ENCODE measurements at regions of chr7 and their contacts with region 1.

Region 1: DNA sequence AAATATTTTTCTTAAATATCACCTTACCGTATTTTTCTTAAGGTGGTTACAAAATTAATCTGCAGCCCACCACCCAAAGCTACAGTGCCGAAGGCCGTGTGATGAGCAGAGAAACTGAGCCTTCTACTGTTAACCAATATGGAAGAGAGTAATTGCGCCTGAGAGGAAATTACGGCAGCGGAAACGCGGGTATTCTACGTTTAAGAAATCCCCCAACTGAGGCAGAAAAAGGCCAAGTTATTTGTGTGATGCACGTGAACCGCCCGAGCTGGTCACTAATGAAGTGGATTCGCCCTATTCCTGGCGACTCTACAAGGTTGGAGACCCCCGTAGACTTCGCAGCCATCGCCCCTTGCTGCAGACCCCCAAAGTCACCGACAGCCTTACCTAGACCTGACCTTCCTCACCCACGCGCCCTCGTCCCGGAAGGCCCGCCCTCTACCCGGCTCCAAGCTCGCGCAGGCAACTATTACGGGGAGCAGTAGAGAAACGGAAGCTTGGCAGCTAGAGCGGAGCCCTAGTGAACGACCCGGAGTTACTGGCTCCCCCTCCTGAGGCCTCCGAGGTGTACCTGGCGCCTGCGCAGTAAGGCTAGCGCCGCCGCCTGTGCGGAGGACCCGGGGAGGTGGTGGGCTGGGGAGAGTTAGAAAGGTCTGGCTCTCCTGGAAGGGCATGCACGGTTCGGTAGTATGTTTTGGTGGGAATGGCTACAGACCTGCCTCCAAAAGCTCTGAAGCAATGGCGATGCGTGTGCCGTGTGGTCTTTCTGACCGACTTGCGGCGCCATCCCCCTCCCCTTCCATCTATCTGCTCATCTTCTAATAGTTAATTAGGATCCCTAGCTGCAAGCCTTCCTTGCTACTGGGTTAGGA is at the start of gene MRPS33:
- DNase-seq: peak; percentile 95 to 97 (median 96)
- H3K4me3 ChIP-seq: peak within 1 kb of the TSS; percentile 61 to 85
- H3K4me3 Mint-ChIP-seq: peak within 1 kb of the TSS; percentile 95 to 100 (median 98)
- H3K27ac ChIP-seq: peak within 1 kb of the TSS; percentile 96
- H3K27ac Mint-ChIP-seq: peak within 1 kb of the TSS; percentile 99 to 100 (median 100)
- H3K4me1 ChIP-seq: peaks cover 24% of the 10 kb centered on the region
- H3K4me1 Mint-ChIP-seq: peaks cover 19 to 42% (median 34%) of the 10 kb centered on the region in 4 donors
- H3K27me3 ChIP-seq: no peaks in the 10 kb centered on the region
- H3K27me3 Mint-ChIP-seq: peaks cover 5 to 7% of the 10 kb centered on the region in 2 donors
- total RNA-seq, gene MRPS33: 46.7 to 48.0 TPM

Region 2: DNA sequence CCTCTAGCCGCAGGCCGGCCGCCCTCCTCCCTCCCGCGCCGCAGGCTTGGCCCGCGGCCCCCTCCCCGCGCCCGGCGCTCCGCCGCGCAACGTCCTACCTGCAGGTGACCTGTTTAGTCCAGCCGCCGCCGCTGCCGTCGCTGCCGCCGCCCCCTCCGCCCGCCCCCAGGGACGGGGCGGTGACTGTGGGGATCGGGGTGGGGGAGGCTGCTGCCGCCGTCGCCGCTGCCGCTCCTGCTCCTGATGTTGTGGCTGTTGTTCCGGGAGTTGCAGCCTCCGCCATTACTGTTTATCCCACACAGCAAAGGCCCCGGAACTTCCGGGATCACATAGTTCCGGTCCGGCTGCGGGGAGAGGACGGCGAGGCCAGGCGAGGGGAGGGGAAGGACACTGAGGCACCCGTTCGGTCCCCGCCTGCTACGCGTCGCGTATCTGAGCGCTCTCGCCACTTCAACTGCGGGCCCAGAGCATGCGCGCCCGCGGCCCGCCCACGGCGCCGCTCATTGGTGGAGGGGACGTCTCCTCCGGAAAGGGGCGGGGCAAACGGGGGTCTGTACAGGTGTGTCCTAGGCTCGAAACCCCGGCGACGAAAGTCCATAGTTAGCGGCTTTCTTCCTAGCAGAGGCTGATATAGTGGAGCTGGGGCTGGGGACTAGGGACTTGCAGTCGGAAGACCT is 535.6 kb before region 1 on chr7 and contains the start of gene MKRN1:
- CTCF ChIA-PET with region 1: interaction called, 3 read pairs
- POLR2A ChIA-PET with region 1: interaction called, 12 read pairs
- intact Hi-C with region 1: loop called (anchors 1 kb)
- DNase-seq: peak; percentile 90 to 93 (median 90)
- H3K4me3 ChIP-seq: peak within 1 kb of the TSS; percentile 59 to 71
- H3K4me3 Mint-ChIP-seq: peak within 1 kb of the TSS; percentile 95 to 100 (median 99)
- H3K27ac ChIP-seq: peak within 1 kb of the TSS; percentile 75
- H3K27ac Mint-ChIP-seq: peak within 1 kb of the TSS; percentile 95 to 99 (median 98)
- H3K4me1 ChIP-seq: peaks cover 25% of the 10 kb centered on the region
- H3K4me1 Mint-ChIP-seq: peaks cover 16 to 40% (median 25%) of the 10 kb centered on the region in 4 donors
- H3K27me3 ChIP-seq: no peaks in the 10 kb centered on the region
- H3K27me3 Mint-ChIP-seq: no peaks in the 10 kb centered on the region
- total RNA-seq, gene MKRN1: 140 to 156 TPM

Region 3: GRCh38 chr7:140696680-140697446 is 317.9 kb before region 1 on chr7 and contains the start of gene NDUFB2:
- CTCF ChIA-PET with region 1: interaction called, 7 read pairs
- POLR2A ChIA-PET with region 1: interaction called, 6 read pairs
- intact Hi-C with region 1: loop called (anchors 1 kb)
- DNase-seq: peak; percentile 84 to 90 (median 90)
- H3K4me3 ChIP-seq: peak within 1 kb of the TSS; percentile 66 to 92
- H3K4me3 Mint-ChIP-seq: peak within 1 kb of the TSS; percentile 93 to 98 (median 97)
- H3K27ac ChIP-seq: peak within 1 kb of the TSS; percentile 89
- H3K27ac Mint-ChIP-seq: peak within 1 kb of the TSS; percentile 96 to 100 (median 98)
- H3K4me1 ChIP-seq: peaks cover 32% of the 10 kb centered on the region
- H3K4me1 Mint-ChIP-seq: peaks cover 18 to 48% (median 33%) of the 10 kb centered on the region in 4 donors
- H3K27me3 ChIP-seq: no peaks in the 10 kb centered on the region
- H3K27me3 Mint-ChIP-seq: no peaks in the 10 kb centered on the region
- total RNA-seq, gene NDUFB2: 94.4 to 98.6 TPM

Region 4: DNA sequence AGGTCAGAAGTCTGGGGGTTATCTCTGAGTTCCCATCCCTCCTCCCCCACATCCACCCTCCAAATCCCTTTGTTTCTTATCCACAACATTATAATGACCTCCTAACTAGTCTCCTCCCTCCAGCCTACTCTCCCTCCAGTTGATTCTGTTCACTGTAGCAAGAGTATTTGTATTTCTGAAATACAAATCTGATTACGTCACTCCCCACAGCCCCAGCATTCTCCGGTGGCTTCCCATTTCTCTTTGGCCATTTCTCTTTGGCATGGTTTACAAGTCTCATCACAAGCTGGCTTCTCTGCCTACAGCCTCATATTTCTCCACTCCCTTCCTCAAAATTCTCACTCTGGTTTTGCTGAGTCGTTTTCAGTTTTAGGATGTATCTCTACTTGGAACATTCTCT is 24.6 kb after region 1 on chr7:
- CTCF ChIA-PET with region 1: no interaction called
- POLR2A ChIA-PET with region 1: no interaction called
- intact Hi-C with region 1: no loop called
- DNase-seq: no peak
- H3K4me3 ChIP-seq: no peak overlapping the region
- H3K4me3 Mint-ChIP-seq: peak overlapping the region in 1 of 8 donors; percentile 31
- H3K27ac ChIP-seq: no peak overlapping the region
- H3K27ac Mint-ChIP-seq: peak overlapping the region in 1 of 7 donors; percentile 8
- H3K4me1 ChIP-seq: no peaks in the 10 kb centered on the region
- H3K4me1 Mint-ChIP-seq: no peaks in the 10 kb centered on the region
- H3K27me3 ChIP-seq: no peaks in the 10 kb centered on the region
- H3K27me3 Mint-ChIP-seq: peaks cover 11 to 16% of the 10 kb centered on the region in 2 donors

Region 5: GRCh38 chr7:141053626-141054025 is 38.9 kb after region 1 on chr7:
- CTCF ChIA-PET with region 1: interaction called, 5 read pairs
- POLR2A ChIA-PET with region 1: interaction called, 10 read pairs
- intact Hi-C with region 1: loop called (anchors 2 kb)
- DNase-seq: peak; percentile 64 to 86 (median 78)
- H3K4me3 ChIP-seq: no peak overlapping the region
- H3K4me3 Mint-ChIP-seq: peak overlapping the region in 6 of 8 donors; percentile 22 to 88 (median 62)
- H3K27ac ChIP-seq: peak overlapping the region; percentile 46
- H3K27ac Mint-ChIP-seq: peak overlapping the region; percentile 87 to 98 (median 91)
- H3K4me1 ChIP-seq: peaks cover 22% of the 10 kb centered on the region
- H3K4me1 Mint-ChIP-seq: peaks cover 14 to 33% (median 21%) of the 10 kb centered on the region in 4 donors
- H3K27me3 ChIP-seq: no peaks in the 10 kb centered on the region
- H3K27me3 Mint-ChIP-seq: peaks cover 6 to 8% of the 10 kb centered on the region in 2 donors

Region 6: DNA sequence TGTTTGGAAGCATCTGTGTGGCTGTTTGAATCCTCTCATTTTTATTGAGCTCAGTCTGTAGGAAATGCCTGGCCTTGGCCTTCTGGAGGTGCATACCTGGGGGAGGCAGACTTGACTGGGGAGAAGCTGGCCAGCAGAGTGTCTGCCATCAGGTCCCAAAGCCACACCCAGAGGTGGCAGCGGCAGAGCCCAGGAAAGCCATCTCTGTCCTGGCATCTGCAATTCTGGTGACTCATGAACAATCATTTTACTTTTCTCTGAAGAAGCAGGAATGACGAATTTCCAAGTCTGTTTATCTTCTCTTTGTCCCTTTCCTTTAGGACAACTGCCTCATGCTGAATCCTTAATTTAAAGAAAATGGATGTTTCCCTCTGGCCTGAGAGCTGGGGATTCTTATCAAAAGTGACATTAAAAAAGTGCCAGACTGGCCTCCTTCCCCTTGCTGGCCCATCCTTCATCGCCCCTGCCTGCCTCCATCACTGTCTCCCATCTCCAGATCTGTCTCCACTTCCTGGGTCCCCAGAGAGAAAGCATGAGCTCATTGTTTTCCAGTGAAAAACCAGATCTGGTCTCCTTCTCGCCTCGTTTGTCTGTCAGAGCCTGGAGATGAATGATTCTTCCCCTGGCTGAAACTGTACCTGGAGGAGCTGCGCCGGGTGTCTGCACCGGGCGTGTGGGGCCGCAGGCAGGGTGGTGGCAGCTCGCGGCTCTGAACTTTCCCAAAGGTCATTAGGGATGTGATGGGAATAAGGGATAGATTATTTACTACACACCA is 183.6 kb after region 1 on chr7:
- CTCF ChIA-PET with region 1: no interaction called
- POLR2A ChIA-PET with region 1: no interaction called
- intact Hi-C with region 1: no loop called
- DNase-seq: no peak
- H3K4me3 ChIP-seq: no peak overlapping the region
- H3K4me3 Mint-ChIP-seq: no peak overlapping the region
- H3K27ac ChIP-seq: no peak overlapping the region
- H3K27ac Mint-ChIP-seq: no peak overlapping the region
- H3K4me1 ChIP-seq: no peaks in the 10 kb centered on the region
- H3K4me1 Mint-ChIP-seq: no peaks in the 10 kb centered on the region
- H3K27me3 ChIP-seq: no peaks in the 10 kb centered on the region
- H3K27me3 Mint-ChIP-seq: peaks cover 5 to 11% of the 10 kb centered on the region in 2 donors

Region 7: GRCh38 chr7:141551094-141551781 is 536.5 kb after region 1 on chr7 and contains the start of gene AGK:
- CTCF ChIA-PET with region 1: no interaction called
- POLR2A ChIA-PET with region 1: interaction called, 7 read pairs
- intact Hi-C with region 1: loop called (anchors 1 kb)
- DNase-seq: peak; percentile 72 to 80 (median 75)
- H3K4me3 ChIP-seq: peak within 1 kb of the TSS; percentile 32 to 70
- H3K4me3 Mint-ChIP-seq: peak within 1 kb of the TSS; percentile 78 to 96 (median 93)
- H3K27ac ChIP-seq: peak within 1 kb of the TSS; percentile 56
- H3K27ac Mint-ChIP-seq: peak within 1 kb of the TSS; percentile 50 to 96 (median 91)
- H3K4me1 ChIP-seq: peaks cover 28% of the 10 kb centered on the region
- H3K4me1 Mint-ChIP-seq: peaks cover 20 to 40% (median 34%) of the 10 kb centered on the region in 4 donors
- H3K27me3 ChIP-seq: no peaks in the 10 kb centered on the region
- H3K27me3 Mint-ChIP-seq: peaks cover 0 to 2% of the 10 kb centered on the region in 2 donors
- total RNA-seq, gene AGK: 28.1 to 30.0 TPM

Measured in CD4-positive, alpha-beta memory T cell (primary cell).